H1 (cell line): ENCODE measurements at regions of chr6 and their contacts with region 1.

Region 1: GRCh38 chr6:116371120-116371917 is 572 bp downstream of the DSE start:
- DNase-seq: peak; percentile 70 to 83
- H3K4me3 ChIP-seq: peak overlapping the region; percentile 81 to 92 (median 86)
- H3K27ac ChIP-seq: peak overlapping the region; percentile 83
- H3K4me1 ChIP-seq: peaks cover 0 to 5% (median 2%) of the 10 kb centered on the region in 4 experiments; a peak in 4 of 7 replicates
- H3K27me3 ChIP-seq: no peaks in the 10 kb centered on the region
- CTCF ChIP-seq: no peak
- EP300 ChIP-seq: no peak
- POLR2A ChIP-seq: peak in 1 of 2 experiments; percentile 66; a peak in 2 of 3 replicates
- RAD21 ChIP-seq: 0 out of 4 replicates have a peak, but pooled peaks of 1 of the 2 experiments have one; percentile 4

Region 2: DNA sequence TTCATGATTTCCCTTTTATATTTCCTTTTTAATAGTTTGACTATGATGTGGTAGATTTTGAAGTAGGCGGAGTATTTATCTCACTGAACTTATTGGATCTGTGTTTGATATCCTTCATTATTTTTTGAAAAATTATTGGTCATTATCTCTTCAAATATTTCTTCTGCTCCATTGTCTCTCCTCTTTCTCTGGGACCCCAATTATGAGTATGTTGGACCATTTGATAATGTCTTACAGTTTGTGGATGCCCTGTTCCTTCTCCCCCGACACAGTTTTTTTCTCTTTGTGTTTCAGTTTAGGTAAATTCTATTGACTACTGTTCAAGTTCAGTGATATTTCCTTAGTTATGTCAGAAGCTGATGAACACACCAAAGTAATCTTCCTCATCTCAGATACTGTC is 196.0 kb before region 1 on chr6:
- CTCF ChIA-PET with region 1: no interaction called
- POLR2A ChIA-PET with region 1: no interaction called
- DNase-seq: no peak
- H3K4me3 ChIP-seq: no peak overlapping the region
- H3K27ac ChIP-seq: no peak overlapping the region
- H3K4me1 ChIP-seq: peaks cover 0 to 4% (median 0%) of the 10 kb centered on the region in 4 experiments; a peak in 1 of 7 replicates
- H3K27me3 ChIP-seq: no peaks in the 10 kb centered on the region
- CTCF ChIP-seq: no peak
- EP300 ChIP-seq: no peak
- POLR2A ChIP-seq: no peak
- RAD21 ChIP-seq: no peak

Region 3: DNA sequence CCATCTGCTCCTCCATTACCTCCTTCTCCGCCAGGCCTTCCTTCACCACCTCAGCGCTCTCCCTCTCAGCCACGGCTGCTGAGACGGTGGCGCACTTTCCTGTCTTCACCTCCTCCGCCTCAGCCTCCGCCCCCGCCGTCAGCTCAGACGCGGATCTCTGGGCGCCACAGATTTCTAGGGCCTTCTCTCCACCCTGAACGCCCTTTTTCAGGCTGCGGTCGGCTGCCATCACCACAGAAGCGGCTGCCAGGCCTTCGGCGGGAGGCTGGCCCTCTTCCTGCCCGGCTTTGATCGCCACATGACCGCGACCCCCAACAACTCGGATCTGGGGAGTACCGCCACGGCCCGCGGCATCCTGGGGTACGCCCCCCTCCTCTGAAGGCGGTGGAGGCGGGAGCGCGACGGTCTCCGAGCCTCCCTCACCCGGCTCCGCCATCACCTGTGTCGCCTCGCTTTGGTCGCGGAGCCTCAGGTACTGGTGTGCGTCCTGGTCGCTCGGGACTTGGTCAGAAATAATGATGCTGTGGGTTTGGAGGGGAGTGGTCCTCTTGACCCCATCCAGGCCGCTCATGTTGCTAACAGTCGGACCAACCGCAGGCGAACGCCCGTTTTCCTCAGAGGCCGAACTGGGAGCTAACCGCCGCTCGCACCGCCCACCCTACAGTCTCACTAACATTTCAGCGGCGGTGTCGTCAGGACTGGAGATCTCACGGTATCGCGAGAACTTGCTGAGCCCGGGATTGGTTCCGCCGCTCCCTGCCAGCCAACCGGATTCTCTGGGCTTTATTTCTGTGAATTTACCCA is 91.9 kb before region 1 on chr6 and contains the start of gene TSPYL1:
- CTCF ChIA-PET with region 1: interaction called, 4 read pairs
- POLR2A ChIA-PET with region 1: interaction called, 26 read pairs
- DNase-seq: peak; percentile 84 to 95
- H3K4me3 ChIP-seq: peak within 1 kb of the TSS; percentile 89 to 100 (median 92)
- H3K27ac ChIP-seq: peak within 1 kb of the TSS; percentile 96
- H3K4me1 ChIP-seq: peaks cover 3 to 14% (median 10%) of the 10 kb centered on the region in 4 experiments; a peak in 5 of 7 replicates
- H3K27me3 ChIP-seq: no peaks in the 10 kb centered on the region
- CTCF ChIP-seq: no peak
- EP300 ChIP-seq: no peak
- POLR2A ChIP-seq: peak; percentile 90 to 99
- RAD21 ChIP-seq: 0 out of 4 replicates have a peak, but pooled peaks of 1 of the 2 experiments have one; percentile 5
- total RNA-seq, gene TSPYL1: 77.9 and 79.1 TPM in 2 replicates

Region 4: DNA sequence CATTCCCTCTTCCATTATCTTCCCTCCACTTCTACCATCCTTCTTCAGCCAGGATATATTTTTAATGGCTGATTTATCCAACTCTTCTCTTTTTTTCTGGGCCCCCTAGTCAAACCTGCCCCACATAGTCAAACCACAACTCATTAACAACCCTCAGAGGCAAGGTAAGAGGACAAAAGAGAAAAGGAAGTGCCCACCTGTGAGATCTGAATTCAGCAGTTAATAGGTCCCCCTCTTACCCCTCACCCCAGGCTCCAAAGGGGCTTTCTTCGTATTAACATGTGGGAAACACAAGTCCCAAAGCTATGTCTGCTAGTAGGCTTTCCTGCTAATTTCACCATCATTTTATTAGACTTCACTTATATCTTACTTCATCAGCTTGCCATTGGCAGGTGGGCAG is 47.5 kb before region 1 on chr6:
- CTCF ChIA-PET with region 1: interaction called, 8 read pairs
- POLR2A ChIA-PET with region 1: interaction called, 12 read pairs
- DNase-seq: no peak
- H3K4me3 ChIP-seq: peak overlapping the region in 1 of 4 experiments; percentile 6; a peak in 1 of 8 replicates
- H3K27ac ChIP-seq: peak overlapping the region; percentile 62; the same call in 1 of the 2 replicates
- H3K4me1 ChIP-seq: peaks cover 3 to 32% (median 26%) of the 10 kb centered on the region in 4 experiments; a peak in 6 of 7 replicates
- H3K27me3 ChIP-seq: no peaks in the 10 kb centered on the region
- CTCF ChIP-seq: no peak
- EP300 ChIP-seq: no peak
- POLR2A ChIP-seq: no peak
- RAD21 ChIP-seq: no peak

Region 5: GRCh38 chr6:116387374-116387773 is 16.1 kb after region 1 on chr6:
- CTCF ChIA-PET with region 1: interaction called, 3 read pairs
- POLR2A ChIA-PET with region 1: interaction called, 10 read pairs
- DNase-seq: no peak
- H3K4me3 ChIP-seq: no peak overlapping the region
- H3K27ac ChIP-seq: no peak overlapping the region
- H3K4me1 ChIP-seq: peaks cover 3 to 7% (median 6%) of the 10 kb centered on the region in 4 experiments; a peak in 5 of 7 replicates
- H3K27me3 ChIP-seq: no peaks in the 10 kb centered on the region
- CTCF ChIP-seq: no peak
- EP300 ChIP-seq: no peak
- POLR2A ChIP-seq: no peak
- RAD21 ChIP-seq: no peak